ENCODE measurements at regions of chr9 and their contacts with region 1.

Region 1: DNA sequence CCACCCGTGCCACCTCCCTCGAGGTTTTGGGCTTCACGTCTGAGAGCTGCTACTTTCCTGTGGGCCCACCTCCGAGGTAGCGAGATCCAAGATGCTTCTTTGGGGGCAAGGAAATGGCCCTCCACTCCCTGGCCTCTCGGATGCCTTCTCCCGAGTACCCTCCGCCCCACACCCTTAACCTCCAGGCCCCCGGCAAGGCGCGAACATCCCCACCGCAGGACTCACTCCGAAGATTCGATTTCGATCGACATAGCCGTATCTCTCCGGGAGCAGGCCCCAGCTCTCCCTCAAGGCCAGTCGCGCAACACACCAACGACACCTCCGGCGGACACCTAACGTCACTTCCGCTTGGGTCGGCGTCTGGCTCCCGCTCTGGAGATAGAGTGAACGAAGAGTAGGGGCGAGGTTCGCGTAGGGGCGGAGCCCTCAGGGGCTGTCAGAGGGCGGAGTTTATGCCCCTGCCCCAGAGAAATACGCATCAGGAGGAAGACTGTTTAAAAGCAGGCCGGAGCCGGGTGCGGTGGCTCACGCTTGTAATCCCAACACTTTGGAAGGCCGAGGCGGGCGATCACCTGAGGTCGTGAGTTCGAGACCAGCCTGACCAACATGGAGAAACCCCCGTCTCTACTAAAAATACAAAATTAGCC is at the start of gene SMU1:
- DNase-seq: peak; percentile 97 to 98 (median 98)
- H3K4me3 ChIP-seq: peak within 1 kb of the TSS; percentile 51 to 82 (median 64)
- H3K4me3 Mint-ChIP-seq: peak within 1 kb of the TSS; percentile 96 to 99
- H3K27ac ChIP-seq: peak within 1 kb of the TSS; percentile 90 to 98
- H3K27ac Mint-ChIP-seq: peak within 1 kb of the TSS; percentile 100
- H3K4me1 ChIP-seq: peaks cover 19 to 24% of the 10 kb centered on the region in 2 donors
- H3K4me1 Mint-ChIP-seq: peaks cover 18% of the 10 kb centered on the region
- H3K27me3 ChIP-seq: no peaks in the 10 kb centered on the region
- H3K27me3 Mint-ChIP-seq: peaks cover 0 to 2% (median 0%) of the 10 kb centered on the region in 3 donors
- CTCF ChIP-seq: no peak
- polyA plus RNA-seq, gene SMU1: 8.0 to 21.7 (median 19.3) TPM

Region 2: DNA sequence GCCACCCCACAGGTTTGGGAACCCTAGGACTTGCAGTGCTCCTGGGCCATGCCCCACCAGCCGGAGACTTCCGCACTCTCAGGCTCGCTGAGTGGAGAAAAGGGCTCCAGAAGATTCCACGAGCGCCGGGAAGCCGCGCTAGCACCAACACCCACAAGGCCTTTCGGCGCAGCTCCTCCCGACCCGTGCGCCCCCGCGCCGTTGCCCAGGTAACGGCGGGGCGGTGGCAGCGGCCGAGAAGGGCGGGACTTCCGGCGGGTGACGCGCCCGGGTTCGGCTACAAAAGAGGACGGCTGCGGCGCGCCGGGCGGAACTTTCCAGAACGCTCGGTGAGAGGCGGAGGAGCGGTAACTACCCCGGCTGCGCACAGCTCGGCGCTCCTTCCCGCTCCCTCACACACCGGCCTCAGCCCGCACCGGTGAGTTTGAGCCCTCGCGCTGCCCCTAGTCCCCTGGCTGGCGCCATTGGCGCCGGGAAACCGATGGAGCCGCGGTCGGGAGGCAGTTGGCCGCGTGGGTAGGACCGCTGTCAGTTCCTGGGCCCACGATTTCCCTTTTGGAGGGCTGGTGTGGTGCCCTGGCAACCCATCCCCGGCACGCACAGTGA is 51.4 kb before region 1 on chr9 and contains the start of gene DNAJA1:
- intact Hi-C with region 1: loop called in 1 of 2 experiments (anchors 10 kb)
- DNase-seq: peak; percentile 92 to 96 (median 95)
- H3K4me3 ChIP-seq: peak within 1 kb of the TSS; percentile 91 to 100 (median 99)
- H3K4me3 Mint-ChIP-seq: peak within 1 kb of the TSS; percentile 95 to 97
- H3K27ac ChIP-seq: peak within 1 kb of the TSS; percentile 97 to 99
- H3K27ac Mint-ChIP-seq: peak within 1 kb of the TSS; percentile 92 to 96 (median 95)
- H3K4me1 ChIP-seq: peaks cover 44 to 55% of the 10 kb centered on the region in 2 donors
- H3K4me1 Mint-ChIP-seq: peaks cover 55% of the 10 kb centered on the region
- H3K27me3 ChIP-seq: no peaks in the 10 kb centered on the region
- H3K27me3 Mint-ChIP-seq: no peaks in the 10 kb centered on the region
- CTCF ChIP-seq: no peak
- polyA plus RNA-seq, gene DNAJA1: 73.3 to 112 (median 93.6) TPM

Region 3: GRCh38 chr9:33044127-33044673 is 32.3 kb before region 1 on chr9:
- intact Hi-C with region 1: loop called in 1 of 2 experiments (anchors 5 kb)
- DNase-seq: peak; percentile 95 to 98 (median 96)
- H3K4me3 ChIP-seq: peak overlapping the region; percentile 43 to 89 (median 54)
- H3K4me3 Mint-ChIP-seq: peak overlapping the region; percentile 77 to 89
- H3K27ac ChIP-seq: peak overlapping the region; percentile 73 to 89
- H3K27ac Mint-ChIP-seq: peak overlapping the region; percentile 89 to 96 (median 93)
- H3K4me1 ChIP-seq: peaks cover 50 to 56% of the 10 kb centered on the region in 2 donors
- H3K4me1 Mint-ChIP-seq: peaks cover 47% of the 10 kb centered on the region
- H3K27me3 ChIP-seq: no peaks in the 10 kb centered on the region
- H3K27me3 Mint-ChIP-seq: no peaks in the 10 kb centered on the region
- CTCF ChIP-seq: no peak

Region 4: DNA sequence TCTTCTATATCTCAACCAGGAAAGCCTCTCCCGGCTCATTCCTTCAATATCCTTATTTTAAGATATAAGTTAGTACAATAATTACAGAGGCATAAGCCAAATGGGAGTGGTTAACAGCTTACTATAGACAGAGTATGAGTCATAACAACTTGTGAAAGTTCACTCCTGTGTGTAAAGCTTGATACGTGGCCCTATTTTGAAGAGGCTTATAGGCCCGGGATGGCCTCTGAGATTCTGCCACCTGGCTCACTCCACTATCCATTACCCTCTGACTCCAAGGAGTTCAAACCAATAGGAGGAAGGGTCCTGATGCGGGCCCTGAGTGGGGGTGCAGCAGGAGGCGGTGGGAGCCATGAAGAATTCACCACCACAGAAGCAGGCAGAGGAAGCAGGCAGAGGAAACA is 54.0 kb after region 1 on chr9:
- intact Hi-C with region 1: loop called in 1 of 2 experiments (anchors 5 kb)
- DNase-seq: peak; percentile 59 to 67 (median 65)
- H3K4me3 ChIP-seq: peak overlapping the region in 1 of 3 experiments; percentile 3
- H3K4me3 Mint-ChIP-seq: peak overlapping the region in 1 of 2 donors; percentile 37
- H3K27ac ChIP-seq: peak overlapping the region; percentile 54 to 78
- H3K27ac Mint-ChIP-seq: peak overlapping the region; percentile 85 to 98 (median 97)
- H3K4me1 ChIP-seq: peaks cover 35 to 54% of the 10 kb centered on the region in 2 donors
- H3K4me1 Mint-ChIP-seq: peaks cover 55% of the 10 kb centered on the region
- H3K27me3 ChIP-seq: no peaks in the 10 kb centered on the region
- H3K27me3 Mint-ChIP-seq: peaks cover 0 to 1% (median 0%) of the 10 kb centered on the region in 3 donors
- CTCF ChIP-seq: no peak

Region 5: DNA sequence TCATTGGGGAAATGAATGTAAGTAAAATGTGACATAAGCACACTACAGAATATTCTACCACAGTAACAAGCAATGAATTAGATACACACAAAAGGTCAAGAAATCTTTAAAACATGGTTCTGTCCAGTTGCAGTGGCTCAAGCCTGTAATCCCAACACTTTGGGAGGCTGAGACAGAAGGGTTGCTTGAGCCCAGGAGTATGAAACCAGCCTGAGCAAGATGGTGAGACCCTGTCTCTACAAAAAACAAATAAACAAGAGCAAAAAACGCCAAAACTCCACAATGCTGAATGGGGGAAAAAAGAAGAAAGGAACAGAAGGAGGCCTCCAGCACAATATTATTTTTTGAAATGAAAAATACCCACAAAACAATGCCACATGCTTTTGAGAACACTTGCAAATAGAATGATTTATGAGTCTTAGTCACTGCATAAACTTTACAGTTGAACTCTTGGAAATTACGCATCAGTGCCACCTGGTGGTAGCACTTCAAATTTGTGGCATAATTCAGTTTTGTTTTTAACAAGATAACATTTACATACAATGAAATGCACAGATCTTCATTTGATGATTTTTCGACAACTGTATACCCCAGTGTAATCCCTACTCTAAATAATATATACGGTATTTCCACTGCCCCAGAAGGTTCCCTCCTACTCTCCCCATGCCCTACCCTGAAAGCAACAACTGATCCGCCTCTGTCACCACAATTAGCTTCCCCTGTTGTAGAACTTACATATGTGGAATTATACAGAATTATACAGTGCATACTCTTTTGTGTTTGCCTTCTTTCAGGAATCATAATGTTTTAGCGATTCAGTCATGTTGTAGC is 149.1 kb after region 1 on chr9:
- intact Hi-C with region 1: loop called (anchors 2 to 5 kb)
- DNase-seq: peak; percentile 63 to 70 (median 68)
- H3K4me3 ChIP-seq: peak overlapping the region in 1 of 3 experiments; percentile 58
- H3K4me3 Mint-ChIP-seq: peak overlapping the region; percentile 53 to 71
- H3K27ac ChIP-seq: peak overlapping the region in 1 of 2 donors; percentile 90
- H3K27ac Mint-ChIP-seq: peak overlapping the region; percentile 91 to 97 (median 96)
- H3K4me1 ChIP-seq: peaks cover 38 to 45% of the 10 kb centered on the region in 2 donors
- H3K4me1 Mint-ChIP-seq: peaks cover 46% of the 10 kb centered on the region
- H3K27me3 ChIP-seq: no peaks in the 10 kb centered on the region
- H3K27me3 Mint-ChIP-seq: peaks cover 0 to 3% (median 0%) of the 10 kb centered on the region in 3 donors
- CTCF ChIP-seq: peak; percentile 85

Region 6: DNA sequence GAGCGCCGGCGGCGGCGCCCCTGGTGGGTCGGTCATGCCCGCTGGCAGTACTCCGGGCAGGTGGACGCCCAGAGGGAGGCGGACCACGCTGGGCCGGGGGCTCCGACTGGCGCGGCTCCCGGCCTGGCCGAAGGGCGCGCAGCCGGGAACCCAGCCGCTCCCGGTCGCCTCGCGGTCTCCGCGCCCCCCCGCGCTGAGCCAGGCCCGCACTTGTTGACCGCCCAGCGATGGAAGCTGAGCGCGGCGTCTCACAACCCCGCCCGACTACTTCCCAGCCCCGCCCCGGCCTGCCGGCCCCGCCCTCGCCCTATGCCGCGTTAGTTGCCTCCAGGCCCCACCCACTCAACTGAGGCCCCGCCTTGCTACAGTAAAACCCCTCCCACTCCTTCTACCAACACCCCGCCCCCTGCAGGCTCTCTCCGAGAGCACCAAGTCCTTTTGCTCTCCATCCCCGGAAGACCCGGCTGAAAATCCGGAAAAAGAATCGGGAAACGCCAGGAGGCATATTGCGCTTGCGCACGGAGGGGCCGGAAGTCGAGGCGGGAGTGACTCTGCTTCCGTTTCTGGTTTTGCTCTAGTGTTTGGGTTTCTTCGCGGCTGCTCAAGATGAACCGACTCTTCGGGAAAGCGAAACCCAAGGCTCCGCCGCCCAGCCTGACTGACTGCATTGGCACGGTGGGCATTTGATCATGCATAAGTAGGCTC is 188.1 kb after region 1 on chr9 and contains the starts of genes BAG1 and CHMP5:
- intact Hi-C with region 1: loop called (anchors 5 to 10 kb)
- DNase-seq: peak; percentile 99
- H3K4me3 ChIP-seq: peak within 1 kb of the TSS; percentile 79 to 98 (median 88)
- H3K4me3 Mint-ChIP-seq: peak within 1 kb of the TSS; percentile 97 to 99
- H3K27ac ChIP-seq: peak within 1 kb of the TSS; percentile 87 to 96
- H3K27ac Mint-ChIP-seq: peak within 1 kb of the TSS; percentile 97 to 100 (median 99)
- H3K4me1 ChIP-seq: peaks cover 22 to 26% of the 10 kb centered on the region in 2 donors
- H3K4me1 Mint-ChIP-seq: peaks cover 35% of the 10 kb centered on the region
- H3K27me3 ChIP-seq: no peaks in the 10 kb centered on the region
- H3K27me3 Mint-ChIP-seq: peaks cover 0 to 1% (median 0%) of the 10 kb centered on the region in 3 donors
- CTCF ChIP-seq: peak; percentile 17
- polyA plus RNA-seq, gene BAG1: 41.8 to 94.5 (median 93.6) TPM
- polyA plus RNA-seq, gene CHMP5: 33.5 to 72.5 (median 65.0) TPM